Transverse colon (tissue), 4 donors: ENCODE measurements at regions of chr22 and their contacts with region 1.

Region 1: GRCh38 chr22:41940832-41941765 is 5.9 kb downstream of the CENPM start:
- DNase-seq: peak; percentile 92
- H3K4me3 ChIP-seq: no peak overlapping the region
- H3K27ac ChIP-seq: peak overlapping the region; percentile 89 to 94 (median 90)
- H3K4me1 ChIP-seq: peaks cover 20 to 36% (median 22%) of the 10 kb centered on the region in 4 donors
- H3K27me3 ChIP-seq: no peaks in the 10 kb centered on the region
- CTCF ChIP-seq: peak; percentile 92 to 98 (median 95)
- EP300 ChIP-seq: no peak
- POLR2A ChIP-seq: no peak

Region 2: DNA sequence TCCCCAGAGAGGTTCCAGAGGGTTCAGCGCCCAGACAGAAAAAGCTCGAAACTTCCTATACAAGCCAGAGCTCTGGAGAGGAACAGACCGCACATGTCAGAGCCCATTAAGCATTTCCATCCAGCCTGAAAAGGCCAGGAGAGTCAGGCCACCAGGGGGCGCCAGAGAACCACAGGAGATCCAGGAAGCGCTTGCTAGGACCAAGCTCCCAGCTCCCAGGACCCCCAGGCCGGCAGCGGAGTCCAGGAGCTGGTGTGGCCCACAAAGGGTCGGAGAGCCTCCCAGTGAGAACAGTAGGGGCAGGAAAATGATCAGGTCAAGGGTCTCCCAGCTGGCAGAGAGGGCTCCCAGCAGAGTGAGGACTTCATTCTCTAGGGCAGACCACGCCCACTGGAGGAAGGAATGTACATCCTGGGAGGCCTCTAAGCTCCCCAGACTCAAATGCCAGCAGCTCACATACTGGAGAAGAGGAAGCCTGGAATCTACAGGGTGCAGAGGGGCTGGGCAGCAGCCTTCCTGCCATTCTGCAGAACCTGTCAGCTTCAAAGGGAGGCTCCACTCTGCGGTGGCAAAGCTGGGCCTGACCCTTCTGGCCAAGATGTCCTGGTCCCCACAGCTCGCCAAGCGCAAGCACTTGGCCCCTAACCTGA is 243.8 kb before region 1 on chr22:
- in situ Hi-C with region 1: loop called in 3 of 4 experiments (anchors 5 to 10 kb)
- intact Hi-C with region 1: loop called (anchors 5 kb)
- DNase-seq: peak; percentile 95
- H3K4me3 ChIP-seq: peak overlapping the region in 1 of 4 donors; percentile 42
- H3K27ac ChIP-seq: peak overlapping the region; percentile 30 to 67 (median 40)
- H3K4me1 ChIP-seq: peaks cover 4 to 18% (median 14%) of the 10 kb centered on the region in 4 donors
- H3K27me3 ChIP-seq: no peaks in the 10 kb centered on the region
- CTCF ChIP-seq: peak; percentile 98 to 100 (median 99)
- EP300 ChIP-seq: no peak
- POLR2A ChIP-seq: no peak

Region 3: DNA sequence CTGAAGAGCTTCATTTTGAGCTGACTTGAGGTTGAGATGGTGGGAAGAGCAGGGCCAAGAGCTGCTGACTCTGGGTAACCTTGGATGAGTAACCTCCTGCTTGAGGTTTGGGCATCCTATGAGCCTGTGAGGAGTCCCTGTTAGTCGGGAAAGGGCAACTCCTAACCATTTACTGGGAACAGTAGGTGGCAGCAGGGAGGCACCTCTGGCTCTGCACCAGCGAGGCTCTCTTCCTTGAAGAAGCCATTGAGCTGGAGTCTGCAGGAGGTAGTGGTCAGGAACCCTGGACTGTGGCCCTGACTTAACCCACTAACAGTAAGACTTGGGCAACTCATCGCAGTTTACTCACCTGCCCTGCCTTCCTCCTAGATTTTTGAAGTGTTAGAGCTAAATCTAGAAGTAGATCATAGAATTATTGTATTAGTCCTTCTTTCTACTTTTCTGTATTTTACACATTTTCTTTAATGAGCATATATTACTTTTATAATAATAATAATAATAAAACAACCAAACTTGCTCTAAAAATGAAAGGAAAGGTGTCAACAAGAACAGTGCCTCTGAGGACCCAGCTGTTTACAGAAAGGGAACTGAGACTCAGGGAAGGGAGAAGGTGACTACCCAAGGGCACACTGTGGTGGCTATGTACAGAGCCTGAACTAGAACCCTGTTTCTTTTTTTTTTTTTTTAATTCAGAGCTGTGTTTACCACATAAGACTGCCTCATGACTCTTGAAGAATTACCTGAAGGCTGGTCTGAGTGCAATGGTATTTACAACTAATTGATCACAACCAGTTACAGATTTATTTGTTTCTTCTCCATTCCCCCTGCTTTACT is 194.3 kb before region 1 on chr22:
- in situ Hi-C with region 1: no loop called
- intact Hi-C with region 1: loop called (anchors 5 kb)
- DNase-seq: peak; percentile 77
- H3K4me3 ChIP-seq: no peak overlapping the region
- H3K27ac ChIP-seq: no peak overlapping the region
- H3K4me1 ChIP-seq: no peaks in the 10 kb centered on the region
- H3K27me3 ChIP-seq: no peaks in the 10 kb centered on the region
- CTCF ChIP-seq: peak; percentile 62 to 77 (median 71)
- EP300 ChIP-seq: no peak
- POLR2A ChIP-seq: no peak